ENCODE measurements at regions of chr11 and their contacts with region 1.

Region 1: DNA sequence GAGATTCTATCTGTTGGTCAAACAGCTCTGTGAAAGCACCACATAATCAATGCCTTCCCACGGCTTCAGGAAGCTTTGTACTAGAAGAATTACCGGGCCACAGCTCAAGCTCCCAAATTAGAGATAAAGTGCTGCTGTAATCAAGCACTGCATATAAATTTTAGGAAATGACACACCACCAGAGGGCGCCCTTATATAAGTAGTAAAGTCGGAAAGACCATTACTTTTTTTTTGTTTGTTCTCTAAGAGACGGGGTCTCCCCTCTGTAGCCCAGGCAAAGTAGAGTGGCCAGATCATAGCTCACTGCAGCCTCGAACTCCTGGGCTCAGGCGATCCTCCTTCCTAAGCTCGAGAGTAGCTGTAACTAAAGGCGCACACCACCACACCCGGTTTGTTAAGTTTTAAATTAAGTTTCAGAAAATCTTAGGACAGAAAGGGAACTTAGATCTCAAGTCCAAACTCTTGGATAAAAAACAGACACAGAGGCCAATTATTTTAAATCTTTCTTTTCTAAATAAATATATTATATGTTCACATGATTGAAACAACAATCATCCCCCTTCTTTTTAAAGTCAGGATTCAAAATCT is 32.6 kb downstream of the PRCP start:
- DNase-seq: peak; percentile 51 to 86 (median 54)
- ATAC-seq: peak; percentile 77
- H3K4me3 ChIP-seq: no peak overlapping the region
- H3K27ac ChIP-seq: no peak overlapping the region
- H3K4me1 ChIP-seq: peaks cover 0 to 2% of the 10 kb centered on the region in 2 experiments; a peak in 2 of 5 replicates
- H3K27me3 ChIP-seq: no peaks in the 10 kb centered on the region
- CTCF ChIP-seq: peak; percentile 57 to 85 (median 61)
- EP300 ChIP-seq: no peak
- POLR2A ChIP-seq: no peak
- RAD21 ChIP-seq: peak; percentile 86 to 89

Region 2: GRCh38 chr11:82775736-82776346 is 91.7 kb before region 1 on chr11:
- CTCF ChIA-PET with region 1: no interaction called
- POLR2A ChIA-PET with region 1: no interaction called
- in situ Hi-C with region 1: no loop called
- intact Hi-C with region 1: loop called (anchors 1 kb)
- DNase-seq: peak; percentile 44 to 68 (median 58)
- ATAC-seq: peak; percentile 99
- H3K4me3 ChIP-seq: no peak overlapping the region
- H3K27ac ChIP-seq: no peak overlapping the region
- H3K4me1 ChIP-seq: no peaks in the 10 kb centered on the region
- H3K27me3 ChIP-seq: no peaks in the 10 kb centered on the region
- CTCF ChIP-seq: peak; percentile 70 to 80 (median 72)
- EP300 ChIP-seq: no peak
- POLR2A ChIP-seq: no peak
- RAD21 ChIP-seq: peak; percentile 10 to 77; a peak in 2 of 4 replicates

Region 3: GRCh38 chr11:82900277-82901164 is 32.9 kb after region 1 on chr11 and contains the start of gene PRCP:
- CTCF ChIA-PET with region 1: interaction called, 3 read pairs
- POLR2A ChIA-PET with region 1: interaction called, 3 read pairs
- in situ Hi-C with region 1: no loop called
- intact Hi-C with region 1: loop called (anchors 1 kb)
- DNase-seq: peak; percentile 87 to 94 (median 90)
- ATAC-seq: peak; percentile 92
- H3K4me3 ChIP-seq: peak within 1 kb of the TSS; percentile 69
- H3K27ac ChIP-seq: peak within 1 kb of the TSS; percentile 77
- H3K4me1 ChIP-seq: peaks cover 8 to 24% of the 10 kb centered on the region in 2 experiments
- H3K27me3 ChIP-seq: no peaks in the 10 kb centered on the region
- CTCF ChIP-seq: 0 out of 6 replicates have a peak, but pooled peaks of 1 of the 3 experiments have one; percentile 5
- EP300 ChIP-seq: peak; percentile 21; the same call in 1 of the 2 replicates
- POLR2A ChIP-seq: peak; percentile 86
- RAD21 ChIP-seq: no peak
- polyA plus RNA-seq, gene PRCP: 28.5 to 34.9 TPM

Region 4: DNA sequence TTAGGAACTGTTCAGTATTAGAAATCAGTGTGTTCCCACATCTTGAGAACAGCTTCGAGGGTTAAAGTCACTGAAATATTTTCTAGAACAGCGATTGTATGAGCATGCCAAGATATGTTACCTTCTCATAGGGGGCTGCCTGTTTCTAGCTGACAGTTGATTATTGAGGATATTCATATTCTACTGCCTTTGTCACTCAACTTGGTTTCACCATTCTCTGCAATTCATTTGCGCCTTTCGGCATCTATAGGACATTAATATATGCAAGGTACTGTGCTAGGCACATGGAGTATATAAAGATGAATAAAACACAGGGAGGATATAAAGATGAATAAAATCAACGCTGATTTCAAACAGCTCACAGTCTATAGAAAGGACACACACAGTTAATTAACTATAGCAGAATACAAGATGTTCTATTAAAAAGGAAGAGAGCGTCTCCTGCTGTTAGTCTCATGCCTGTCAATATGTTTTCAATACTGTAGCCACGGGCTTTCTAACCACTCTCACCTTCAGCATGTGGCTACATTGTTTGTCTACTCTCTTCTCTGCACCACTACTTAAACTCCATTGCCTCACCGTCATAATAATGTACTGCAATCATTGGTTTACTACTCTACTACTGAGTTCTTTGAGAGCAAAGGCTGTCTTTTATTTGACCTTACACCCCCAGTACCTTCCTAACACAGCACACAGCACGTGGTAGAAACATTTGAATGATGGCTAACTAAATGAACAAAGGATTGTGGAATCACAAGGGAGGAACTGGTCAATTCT is 122.2 kb after region 1 on chr11:
- CTCF ChIA-PET with region 1: no interaction called
- POLR2A ChIA-PET with region 1: no interaction called
- in situ Hi-C with region 1: no loop called
- intact Hi-C with region 1: loop called (anchors 5 kb)
- DNase-seq: no peak
- ATAC-seq: peak; percentile 18; the same call in 1 of the 3 replicates
- H3K4me3 ChIP-seq: no peak overlapping the region
- H3K27ac ChIP-seq: no peak overlapping the region
- H3K4me1 ChIP-seq: peaks cover 2 to 25% of the 10 kb centered on the region in 2 experiments; a peak in 3 of 5 replicates
- H3K27me3 ChIP-seq: no peaks in the 10 kb centered on the region
- CTCF ChIP-seq: peak in 1 of 3 experiments; percentile 32; a peak in 2 of 6 replicates
- EP300 ChIP-seq: no peak
- POLR2A ChIP-seq: no peak
- RAD21 ChIP-seq: 0 out of 4 replicates have a peak, but pooled peaks have one; percentile 8 to 28

Region 5: GRCh38 chr11:83249972-83250593 is 382.5 kb after region 1 on chr11:
- CTCF ChIA-PET with region 1: interaction called, 7 read pairs
- POLR2A ChIA-PET with region 1: no interaction called
- in situ Hi-C with region 1: no loop called
- intact Hi-C with region 1: loop called (anchors 1 kb)
- DNase-seq: peak; percentile 47 to 61 (median 50)
- ATAC-seq: peak; percentile 92
- H3K4me3 ChIP-seq: no peak overlapping the region
- H3K27ac ChIP-seq: no peak overlapping the region
- H3K4me1 ChIP-seq: no peaks in the 10 kb centered on the region
- H3K27me3 ChIP-seq: no peaks in the 10 kb centered on the region
- CTCF ChIP-seq: peak; percentile 46 to 77 (median 55); a peak in 5 of 6 replicates
- EP300 ChIP-seq: no peak
- POLR2A ChIP-seq: no peak
- RAD21 ChIP-seq: peak; percentile 73 to 81

Measured in K562 (cell line).